ENCODE measurements at regions of chr19 and their contacts with region 1.

Region 1: DNA sequence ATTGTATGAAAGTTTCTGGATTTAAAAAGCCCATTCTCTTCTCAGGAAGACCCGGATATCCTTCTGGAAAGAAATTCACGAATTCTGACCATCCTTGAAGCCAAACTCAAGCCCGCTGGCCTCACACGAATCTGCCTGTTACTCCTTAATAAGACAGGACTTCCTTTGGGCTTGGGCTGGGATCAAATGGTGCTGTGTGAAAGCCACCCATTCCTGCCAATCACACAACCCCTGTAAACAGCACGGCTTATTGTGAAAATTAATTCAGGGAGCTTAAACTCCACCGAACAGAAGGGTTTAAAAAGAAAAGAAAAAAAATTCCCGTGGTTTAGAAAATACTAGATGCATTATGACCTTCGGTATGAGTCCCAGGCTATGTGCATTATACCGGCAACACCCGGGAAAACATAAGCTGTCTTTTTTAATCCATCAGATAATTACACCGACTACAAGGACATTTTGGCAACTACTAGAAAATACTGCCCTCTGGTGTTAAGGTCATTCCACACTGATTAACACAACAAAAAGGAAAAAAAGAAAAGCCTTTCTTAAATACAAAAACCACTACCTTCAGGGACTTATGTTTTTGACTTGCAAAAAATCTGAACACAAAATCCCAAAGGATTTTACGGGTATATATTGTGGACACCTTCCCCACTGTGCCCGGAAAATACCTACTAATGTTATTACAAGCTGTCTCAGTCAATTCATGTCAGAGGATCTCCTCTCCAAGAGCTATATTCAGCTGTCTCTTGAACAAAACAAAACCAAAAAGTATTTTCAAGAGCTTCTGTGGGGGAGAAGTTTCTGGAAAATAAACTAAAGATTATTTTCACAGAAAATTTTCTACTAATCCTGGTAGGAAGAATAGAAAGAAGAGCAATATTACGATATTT is 76.0 kb upstream of the LSM14A start:
- DNase-seq: peak; percentile 66
- ATAC-seq: peak; percentile 89
- H3K4me3 ChIP-seq: 0 out of 4 replicates have a peak overlapping the region, but pooled peaks of 1 of the 2 experiments have one; percentile 6
- H3K27ac ChIP-seq: no peak overlapping the region
- H3K4me1 ChIP-seq: 0 out of 4 replicates have a peak, but pooled peaks cover 0 to 5% of the 10 kb centered on the region in 2 experiments
- H3K27me3 ChIP-seq: no peaks in the 10 kb centered on the region
- CTCF ChIP-seq: peak; percentile 57 to 98 (median 81)
- POLR2A ChIP-seq: no peak
- RAD21 ChIP-seq: peak; percentile 87

Region 2: DNA sequence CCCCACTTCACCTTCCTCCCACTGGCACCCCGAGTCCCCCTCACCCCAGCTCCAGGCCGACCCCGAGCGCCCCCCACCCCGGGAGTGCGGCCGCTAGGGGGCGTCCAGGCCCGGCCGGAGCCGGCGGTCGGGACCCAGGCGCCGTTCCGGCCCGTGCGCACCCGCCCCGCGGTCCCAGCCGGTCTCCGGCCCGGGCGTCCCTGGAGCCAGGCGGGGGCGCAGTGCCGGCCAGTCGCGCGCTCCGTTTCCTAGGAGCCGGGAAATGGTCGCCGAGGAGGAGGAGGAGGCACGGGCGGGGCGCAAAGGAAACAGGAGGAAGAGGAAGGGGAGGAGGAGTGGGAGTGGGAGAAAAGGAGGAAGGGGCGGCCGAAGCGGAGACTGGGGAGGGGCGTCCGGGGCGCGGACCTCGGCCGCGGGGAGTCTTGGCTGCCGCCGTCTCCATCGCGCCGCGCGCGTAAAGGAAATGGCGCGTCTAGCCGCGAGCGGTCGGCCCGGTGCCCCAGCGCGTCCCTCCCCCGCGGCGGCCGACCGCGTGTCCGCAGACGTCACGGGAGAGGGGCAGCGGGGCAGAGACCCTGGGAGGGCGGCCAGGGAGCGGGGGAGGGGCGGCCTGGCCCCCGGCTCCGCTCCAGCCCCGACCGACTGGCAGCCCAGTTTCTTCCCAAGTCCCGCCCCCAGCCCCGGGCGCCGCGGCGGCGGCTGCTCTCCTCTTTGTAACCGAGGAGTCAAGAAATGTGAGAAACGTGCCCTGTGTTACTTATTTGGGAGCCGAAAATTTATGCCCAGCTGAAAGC is 300.7 kb before region 1 on chr19:
- CTCF ChIA-PET with region 1: interaction called, 15 read pairs
- POLR2A ChIA-PET with region 1: no interaction called
- RAD21 ChIA-PET with region 1: interaction called in 1 of 2 experiments, 5 read pairs
- intact Hi-C with region 1: no loop called
- DNase-seq: no peak
- ATAC-seq: peak; percentile 77
- H3K4me3 ChIP-seq: peak overlapping the region; percentile 59 to 65
- H3K27ac ChIP-seq: peak overlapping the region; percentile 83
- H3K4me1 ChIP-seq: peaks cover 7 to 15% of the 10 kb centered on the region in 2 experiments; a peak in 3 of 4 replicates
- H3K27me3 ChIP-seq: no peaks in the 10 kb centered on the region
- CTCF ChIP-seq: peak; percentile 61 to 75 (median 74); a peak in 5 of 6 replicates
- POLR2A ChIP-seq: no peak
- RAD21 ChIP-seq: peak; percentile 44; the same call in 1 of the 2 replicates

Region 3: DNA sequence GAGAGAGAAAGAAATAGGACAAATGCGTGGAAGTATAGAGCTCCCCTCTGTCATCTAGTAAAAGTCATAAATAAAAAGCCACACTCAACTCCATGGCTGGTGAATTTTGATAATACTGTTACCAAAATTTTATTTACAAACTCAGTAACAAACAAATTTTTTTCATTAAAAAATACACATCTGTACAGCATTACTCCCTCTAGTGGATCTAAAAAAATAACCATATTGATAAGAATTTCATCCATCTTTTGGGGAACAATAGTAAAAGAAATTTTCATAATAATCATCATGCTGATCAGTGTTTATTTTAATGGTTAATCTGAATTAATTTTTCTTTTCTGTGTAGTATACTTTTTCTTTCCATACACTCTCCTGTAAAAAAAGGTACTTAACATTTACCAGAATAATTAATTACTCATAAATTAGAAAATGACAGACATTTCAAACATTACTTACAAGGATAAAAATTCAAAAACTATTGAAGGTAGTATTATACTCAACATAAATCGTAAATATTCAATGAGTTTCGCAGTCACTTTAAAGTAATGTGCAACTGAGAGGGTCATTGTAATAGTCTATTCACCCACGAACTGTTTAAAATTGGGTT is 97.4 kb before region 1 on chr19:
- CTCF ChIA-PET with region 1: interaction called, 11 read pairs
- POLR2A ChIA-PET with region 1: no interaction called
- RAD21 ChIA-PET with region 1: no interaction called
- intact Hi-C with region 1: loop called (anchors 5 kb)
- DNase-seq: no peak
- ATAC-seq: no peak
- H3K4me3 ChIP-seq: no peak overlapping the region
- H3K27ac ChIP-seq: no peak overlapping the region
- H3K4me1 ChIP-seq: no peaks in the 10 kb centered on the region
- H3K27me3 ChIP-seq: no peaks in the 10 kb centered on the region
- CTCF ChIP-seq: peak; percentile 33 to 79 (median 53); a peak in 4 of 6 replicates
- POLR2A ChIP-seq: no peak
- RAD21 ChIP-seq: peak; percentile 43

Region 4: GRCh38 chr19:34041925-34042521 is 54.2 kb before region 1 on chr19:
- CTCF ChIA-PET with region 1: interaction called, 49 read pairs
- POLR2A ChIA-PET with region 1: no interaction called
- RAD21 ChIA-PET with region 1: interaction called, 7 to 8 read pairs
- intact Hi-C with region 1: loop called (anchors 1 kb)
- DNase-seq: peak; percentile 46
- ATAC-seq: peak; percentile 98
- H3K4me3 ChIP-seq: no peak overlapping the region
- H3K27ac ChIP-seq: no peak overlapping the region
- H3K4me1 ChIP-seq: peaks cover 0 to 7% of the 10 kb centered on the region in 2 experiments; a peak in 2 of 4 replicates
- H3K27me3 ChIP-seq: no peaks in the 10 kb centered on the region
- CTCF ChIP-seq: peak; percentile 77 to 99 (median 99)
- POLR2A ChIP-seq: no peak
- RAD21 ChIP-seq: peak; percentile 63

Region 5: GRCh38 chr19:34082289-34083077 is 13.8 kb before region 1 on chr19:
- CTCF ChIA-PET with region 1: interaction called, 18 read pairs
- POLR2A ChIA-PET with region 1: no interaction called
- RAD21 ChIA-PET with region 1: no interaction called
- intact Hi-C with region 1: no loop called
- DNase-seq: no peak
- ATAC-seq: no peak
- H3K4me3 ChIP-seq: no peak overlapping the region
- H3K27ac ChIP-seq: no peak overlapping the region
- H3K4me1 ChIP-seq: no peaks in the 10 kb centered on the region
- H3K27me3 ChIP-seq: no peaks in the 10 kb centered on the region
- CTCF ChIP-seq: no peak
- POLR2A ChIP-seq: no peak
- RAD21 ChIP-seq: no peak

Region 6: GRCh38 chr19:34145741-34146202 is 49.5 kb after region 1 on chr19:
- CTCF ChIA-PET with region 1: interaction called, 6 read pairs
- POLR2A ChIA-PET with region 1: no interaction called
- RAD21 ChIA-PET with region 1: no interaction called
- intact Hi-C with region 1: loop called (anchors 2 kb)
- DNase-seq: peak; percentile 33
- ATAC-seq: peak; percentile 83
- H3K4me3 ChIP-seq: no peak overlapping the region
- H3K27ac ChIP-seq: no peak overlapping the region
- H3K4me1 ChIP-seq: no peaks in the 10 kb centered on the region
- H3K27me3 ChIP-seq: no peaks in the 10 kb centered on the region
- CTCF ChIP-seq: peak; percentile 67 to 88 (median 84)
- POLR2A ChIP-seq: no peak
- RAD21 ChIP-seq: peak; percentile 80

Region 7: DNA sequence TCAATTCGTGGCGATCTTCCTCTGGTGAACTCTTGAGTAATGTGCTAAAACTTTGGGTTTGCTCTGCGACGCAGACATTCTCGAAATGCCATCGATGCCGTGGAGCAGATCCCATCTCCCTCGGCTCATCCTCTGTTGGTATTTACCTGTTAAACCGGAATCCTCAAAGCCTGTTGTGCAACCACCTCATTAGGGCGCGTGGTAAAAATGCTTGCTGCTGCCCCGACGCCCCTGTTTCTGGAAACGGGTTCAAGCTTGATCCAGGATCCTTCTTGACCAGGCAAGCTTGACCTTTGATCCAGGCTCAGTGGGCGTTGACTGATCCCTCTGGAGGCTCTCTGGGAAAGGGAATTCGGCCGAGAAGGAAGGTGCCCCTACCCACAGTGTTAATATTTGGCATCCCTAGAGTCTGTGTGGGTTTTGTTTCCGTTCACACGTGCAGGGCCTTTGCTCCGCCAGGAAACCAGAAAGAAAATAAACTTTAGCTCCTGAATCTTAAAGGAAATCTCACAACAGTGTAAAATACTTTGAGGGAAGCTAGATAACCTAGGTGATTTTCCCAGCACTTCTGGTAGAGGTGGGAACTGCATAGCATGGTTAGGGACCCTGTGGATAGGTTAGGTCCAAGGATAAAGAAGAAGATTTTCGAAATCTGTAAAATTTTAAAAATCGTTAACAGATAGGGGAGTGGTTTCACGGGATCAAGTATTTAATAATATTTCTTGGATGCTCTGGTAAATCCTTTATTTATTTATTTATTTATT is 77.1 kb after region 1 on chr19:
- CTCF ChIA-PET with region 1: no interaction called
- POLR2A ChIA-PET with region 1: no interaction called
- RAD21 ChIA-PET with region 1: no interaction called
- intact Hi-C with region 1: no loop called
- DNase-seq: no peak
- ATAC-seq: peak; percentile 26
- H3K4me3 ChIP-seq: peak overlapping the region; percentile 56 to 95
- H3K27ac ChIP-seq: peak overlapping the region; percentile 98
- H3K4me1 ChIP-seq: peaks cover 10 to 37% of the 10 kb centered on the region in 2 experiments; a peak in 3 of 4 replicates
- H3K27me3 ChIP-seq: no peaks in the 10 kb centered on the region
- CTCF ChIP-seq: no peak; a peak in 1 of 6 replicates
- POLR2A ChIP-seq: no peak
- RAD21 ChIP-seq: no peak

Measured in HCT116 (cell line).